ENCODE measurements at regions of chrX and their contacts with region 1.

Region 1: GRCh38 chrX:132615391-132616131 is 126.7 kb upstream of the MBNL3 start:
- DNase-seq: no peak
- ATAC-seq: no peak

Region 2: DNA sequence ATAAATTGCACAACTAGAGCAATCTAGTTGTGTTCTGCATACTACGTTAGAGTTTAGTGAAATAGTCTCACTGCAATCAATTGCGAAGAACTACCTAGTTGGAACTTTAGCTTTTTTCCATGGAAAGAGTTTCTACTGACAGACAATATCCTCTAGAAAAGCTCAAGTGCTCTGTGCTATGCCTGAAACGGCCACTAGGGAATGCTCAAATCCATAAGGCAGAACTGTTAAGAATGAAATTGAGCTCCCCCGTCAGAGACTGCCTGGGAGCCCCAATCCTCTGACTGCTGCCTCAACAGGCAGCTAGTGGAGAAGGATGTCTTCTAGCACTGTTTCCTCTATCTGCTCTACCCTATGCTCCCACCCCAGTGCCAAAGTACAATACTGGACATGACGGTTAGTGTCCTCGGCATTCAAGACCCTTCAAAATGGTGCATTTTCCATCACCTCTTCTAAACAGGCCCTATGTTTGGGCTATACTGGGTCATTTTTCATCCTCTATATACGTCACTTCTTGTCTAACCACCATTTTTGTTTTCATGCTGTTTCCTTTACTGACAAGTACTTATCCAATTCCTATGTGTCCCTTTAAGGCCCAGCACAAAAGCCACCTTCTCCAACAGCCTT is 523.0 kb before region 1 on chrX:
- intact Hi-C with region 1: loop called (anchors 10 kb)
- DNase-seq: no peak
- ATAC-seq: no peak

Region 3: GRCh38 chrX:132226169-132226568 is 389.4 kb before region 1 on chrX:
- intact Hi-C with region 1: loop called (anchors 10 kb)
- DNase-seq: no peak
- ATAC-seq: no peak

Region 4: GRCh38 chrX:132957211-132958090 is 341.9 kb after region 1 on chrX:
- intact Hi-C with region 1: no loop called
- DNase-seq: no peak
- ATAC-seq: no peak